ENCODE measurements at regions of chr3 and their contacts with region 1.

Region 1: DNA sequence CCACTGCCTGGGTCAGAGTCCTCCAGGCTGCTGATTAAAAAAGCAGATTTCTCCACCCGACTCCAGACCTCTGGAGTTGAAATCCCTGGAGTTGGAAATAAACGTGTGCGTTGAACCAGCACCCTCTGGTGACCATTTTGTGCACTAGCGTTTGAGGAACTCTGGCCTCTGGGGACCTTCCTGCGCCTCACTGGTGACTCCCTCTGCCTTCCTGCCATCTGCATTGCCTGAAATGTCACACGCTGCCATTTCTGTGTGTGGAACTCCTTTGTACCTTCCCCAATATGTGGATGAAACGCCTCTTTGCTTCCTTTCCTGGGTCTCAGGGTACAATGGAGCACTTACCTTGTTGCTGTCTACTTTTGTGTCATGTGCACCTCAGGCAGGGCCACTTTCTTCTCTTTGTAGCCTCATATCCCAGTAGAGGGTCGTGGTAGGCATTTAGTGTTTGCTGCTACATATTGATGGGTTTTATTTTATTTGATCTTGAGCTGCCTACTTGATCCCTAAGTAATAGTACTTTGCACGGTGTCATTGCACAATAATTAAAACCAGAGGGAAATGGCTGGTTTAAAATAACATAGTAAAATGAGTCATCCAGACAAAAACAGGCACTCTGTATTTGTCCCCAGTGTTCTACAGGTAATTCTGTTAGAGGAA is 56.8 kb downstream of the GPR171 start:
- DNase-seq: peak; percentile 71
- ATAC-seq: peak; percentile 98
- H3K4me3 Mint-ChIP-seq: no peak overlapping the region
- H3K27ac Mint-ChIP-seq: no peak overlapping the region
- H3K4me1 Mint-ChIP-seq: no peaks in the 10 kb centered on the region
- H3K27me3 Mint-ChIP-seq: peaks cover 3% of the 10 kb centered on the region
- CTCF ChIP-seq: peak; percentile 98

Region 2: DNA sequence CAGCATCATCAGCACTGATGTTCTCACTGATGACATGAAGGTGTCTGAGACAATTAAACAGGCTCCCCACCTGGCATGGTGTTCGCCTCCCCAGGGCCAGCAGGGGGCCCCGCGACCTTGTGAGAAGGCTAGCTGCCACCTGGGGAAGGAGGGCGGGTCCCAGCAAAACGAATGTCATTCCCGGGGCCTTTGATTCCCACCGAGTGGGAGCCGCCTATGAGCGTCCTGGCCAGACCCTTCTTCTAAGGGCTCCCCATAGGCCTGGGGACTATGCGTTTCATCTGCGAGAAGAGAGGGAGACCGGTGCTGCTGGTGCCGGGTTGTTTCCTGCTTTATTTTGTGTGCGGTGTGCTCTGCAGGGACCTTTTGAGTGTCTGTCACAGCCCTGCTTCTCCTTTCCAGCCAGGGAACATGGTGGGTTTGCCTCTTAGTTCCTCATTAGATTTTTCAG is 220.4 kb before region 1 on chr3:
- CTCF ChIA-PET with region 1: interaction called, 9 read pairs
- POLR2A ChIA-PET with region 1: no interaction called
- intact Hi-C with region 1: loop called (anchors 5 kb)
- DNase-seq: peak; percentile 76
- ATAC-seq: peak; percentile 96
- H3K4me3 Mint-ChIP-seq: peak overlapping the region; percentile 41
- H3K27ac Mint-ChIP-seq: no peak overlapping the region
- H3K4me1 Mint-ChIP-seq: peaks cover 6% of the 10 kb centered on the region
- H3K27me3 Mint-ChIP-seq: peaks cover 10% of the 10 kb centered on the region
- CTCF ChIP-seq: peak; percentile 80

Region 3: DNA sequence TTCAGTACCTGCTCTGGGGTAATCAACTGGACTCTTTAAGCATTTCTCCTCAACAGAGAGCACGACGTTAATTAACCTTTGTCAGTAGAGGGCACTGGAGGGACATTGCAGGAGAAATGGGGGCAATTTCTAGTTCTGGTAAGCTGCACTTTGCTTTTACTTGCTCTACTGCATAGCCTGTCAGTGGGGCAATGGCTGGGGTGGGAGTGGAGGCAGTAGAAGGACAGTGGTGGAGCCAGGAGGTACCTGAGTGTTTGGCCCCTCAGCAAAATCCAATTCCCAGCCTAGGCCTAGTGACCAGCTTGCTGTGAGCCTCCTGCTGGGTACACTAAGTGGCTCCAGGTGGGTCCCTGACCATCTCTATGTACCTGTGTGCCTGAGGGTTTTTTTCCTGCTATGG is 79.0 kb before region 1 on chr3:
- CTCF ChIA-PET with region 1: interaction called, 63 read pairs
- POLR2A ChIA-PET with region 1: no interaction called
- intact Hi-C with region 1: loop called (anchors 5 kb)
- DNase-seq: peak; percentile 13
- ATAC-seq: peak; percentile 51
- H3K4me3 Mint-ChIP-seq: no peak overlapping the region
- H3K27ac Mint-ChIP-seq: no peak overlapping the region
- H3K4me1 Mint-ChIP-seq: no peaks in the 10 kb centered on the region
- H3K27me3 Mint-ChIP-seq: peaks cover 6% of the 10 kb centered on the region
- CTCF ChIP-seq: peak; percentile 49

Region 4: DNA sequence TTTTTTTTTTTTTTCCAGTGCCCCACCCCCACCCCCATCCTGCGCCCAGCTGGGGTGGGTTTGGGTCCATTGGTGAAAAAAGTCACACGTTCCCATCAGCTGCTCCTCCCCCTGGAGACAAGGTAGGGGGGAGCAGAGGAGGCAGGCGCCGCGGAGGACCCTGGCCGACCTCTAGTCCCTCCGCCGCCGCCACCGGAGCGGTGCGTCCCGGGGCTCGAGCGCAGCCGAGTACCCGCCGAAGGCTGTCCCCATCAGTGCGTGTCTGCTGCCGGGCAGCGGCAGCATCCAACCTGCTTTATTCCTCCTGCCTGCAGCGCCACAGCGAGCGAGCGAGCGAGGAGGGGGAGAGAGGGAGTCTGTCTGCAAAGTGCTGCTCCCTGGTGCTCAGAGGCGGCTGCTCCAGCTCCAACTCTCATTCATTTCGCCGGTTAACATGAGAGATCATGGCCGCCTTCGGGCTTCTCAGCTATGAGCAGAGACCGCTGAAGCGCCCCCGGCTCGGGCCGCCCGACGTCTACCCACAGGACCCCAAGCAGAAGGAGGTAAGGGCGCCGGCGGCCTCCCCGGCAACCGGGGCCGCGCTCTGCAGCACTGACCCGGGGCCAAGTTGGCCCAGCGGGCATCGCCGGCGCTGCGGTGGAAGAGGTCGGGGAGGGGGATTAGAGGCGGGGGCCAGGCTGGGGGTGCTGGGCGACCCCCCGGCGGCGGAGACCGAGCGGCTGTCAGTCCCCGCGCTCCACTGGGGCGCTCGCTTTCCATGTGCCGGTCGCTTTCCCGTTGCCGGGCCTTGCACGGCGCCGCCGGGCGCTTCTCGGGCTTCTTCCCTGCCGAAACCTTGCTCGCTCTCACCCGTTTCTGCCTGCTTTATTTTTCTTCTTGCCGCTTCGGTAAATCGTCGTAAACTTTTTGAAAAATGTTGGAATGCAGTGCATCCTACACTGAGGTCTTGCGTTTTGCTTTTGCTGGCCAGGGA is 59.4 kb before region 1 on chr3:
- CTCF ChIA-PET with region 1: interaction called, 40 read pairs
- POLR2A ChIA-PET with region 1: no interaction called
- intact Hi-C with region 1: loop called (anchors 5 kb)
- DNase-seq: peak; percentile 82
- ATAC-seq: peak; percentile 85
- H3K4me3 Mint-ChIP-seq: peak overlapping the region; percentile 80
- H3K27ac Mint-ChIP-seq: no peak overlapping the region
- H3K4me1 Mint-ChIP-seq: peaks cover 9% of the 10 kb centered on the region
- H3K27me3 Mint-ChIP-seq: peaks cover 36% of the 10 kb centered on the region
- CTCF ChIP-seq: peak; percentile 57

Region 5: GRCh38 chr3:151156618-151157216 is 10.5 kb after region 1 on chr3:
- CTCF ChIA-PET with region 1: interaction called, 10 read pairs
- POLR2A ChIA-PET with region 1: no interaction called
- intact Hi-C with region 1: no loop called
- DNase-seq: peak; percentile 49
- ATAC-seq: peak; percentile 77
- H3K4me3 Mint-ChIP-seq: no peak overlapping the region
- H3K27ac Mint-ChIP-seq: no peak overlapping the region
- H3K4me1 Mint-ChIP-seq: no peaks in the 10 kb centered on the region
- H3K27me3 Mint-ChIP-seq: peaks cover 5% of the 10 kb centered on the region
- CTCF ChIP-seq: peak; percentile 52

Measured in activated CD8-positive, alpha-beta T cell treated with anti-CD3 and anti-CD28 coated beads for 36 hours (primary cell).